Heart left ventricle (tissue), 16 donors: ENCODE measurements at regions of chr3 and their contacts with region 1.

Region 1: GRCh38 chr3:36244728-36245127 is 135.6 kb upstream of the STAC start:
- DNase-seq: no peak
- ATAC-seq: no peak
- H3K4me3 ChIP-seq: no peak overlapping the region
- H3K27ac ChIP-seq: no peak overlapping the region
- H3K4me1 ChIP-seq: no peaks in the 10 kb centered on the region
- H3K27me3 ChIP-seq: no peaks in the 10 kb centered on the region
- CTCF ChIP-seq: no peak
- POLR2A ChIP-seq: no peak

Region 2: DNA sequence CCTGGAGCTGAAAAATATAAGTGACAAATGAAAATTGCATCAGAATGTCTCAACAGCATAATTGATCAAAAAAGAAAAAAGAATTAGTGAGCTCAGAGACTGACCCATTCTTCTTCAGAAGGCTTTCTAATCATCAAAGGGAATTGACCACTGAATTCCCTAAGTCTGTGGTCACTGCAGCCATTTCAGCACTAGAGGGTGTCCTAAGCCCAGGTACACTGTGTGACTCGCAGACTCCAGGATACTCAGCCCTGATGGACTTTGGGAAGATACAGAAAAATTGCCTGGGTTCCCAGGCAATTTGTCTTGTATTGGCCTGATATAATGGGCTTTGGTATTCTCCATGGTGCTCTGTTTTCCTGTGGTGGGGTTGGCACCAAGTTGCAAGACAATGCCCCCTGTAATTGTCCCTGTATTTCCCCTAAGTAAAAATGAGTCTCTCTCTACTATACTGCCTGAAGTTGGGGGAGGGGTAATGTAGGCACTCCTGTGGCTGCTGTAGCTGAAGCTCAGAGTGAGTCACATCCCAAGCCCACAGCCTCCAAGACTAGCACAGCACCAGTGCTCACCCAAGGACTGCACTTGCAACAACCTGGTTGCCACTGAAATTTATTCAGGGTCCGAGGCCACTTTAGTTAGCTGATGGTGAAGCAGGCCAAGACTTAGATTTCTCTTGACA is 120.5 kb before region 1 on chr3:
- intact Hi-C with region 1: no loop called
- DNase-seq: no peak
- ATAC-seq: no peak
- H3K4me3 ChIP-seq: no peak overlapping the region
- H3K27ac ChIP-seq: no peak overlapping the region
- H3K4me1 ChIP-seq: no peaks in the 10 kb centered on the region
- H3K27me3 ChIP-seq: no peaks in the 10 kb centered on the region
- CTCF ChIP-seq: peak in 1 of 12 donors; percentile 14
- POLR2A ChIP-seq: no peak

Region 3: GRCh38 chr3:36380221-36381031 is 135.7 kb after region 1 on chr3 and contains the start of gene STAC:
- intact Hi-C with region 1: loop called in 1 of 10 experiments (anchors 10 kb)
- DNase-seq: peak in 3 of 5 donors; percentile 6 to 58 (median 23)
- ATAC-seq: peak in 2 of 4 donors; percentile 41 to 44
- H3K4me3 ChIP-seq: peak within 1 kb of the TSS; percentile 33 to 65 (median 52)
- H3K27ac ChIP-seq: peak within 1 kb of the TSS in 1 of 12 donors; percentile 9
- H3K4me1 ChIP-seq: peaks cover 0 to 13% (median 0%) of the 10 kb centered on the region in 12 donors
- H3K27me3 ChIP-seq: peaks cover 5 to 31% (median 16%) of the 10 kb centered on the region in 9 donors
- CTCF ChIP-seq: no peak
- POLR2A ChIP-seq: no peak
- total RNA-seq, gene STAC: 0.22 to 1.3 (median 0.52) TPM in 8 of 9 donors, not detected in the other

Region 4: GRCh38 chr3:36597422-36597821 is 352.7 kb after region 1 on chr3:
- intact Hi-C with region 1: no loop called
- DNase-seq: no peak
- ATAC-seq: no peak
- H3K4me3 ChIP-seq: no peak overlapping the region
- H3K27ac ChIP-seq: no peak overlapping the region
- H3K4me1 ChIP-seq: no peaks in the 10 kb centered on the region
- H3K27me3 ChIP-seq: peaks cover 0 to 5% (median 0%) of the 10 kb centered on the region in 9 donors
- CTCF ChIP-seq: no peak
- POLR2A ChIP-seq: no peak